Activated CD4-positive, alpha-beta T cell treated with anti-CD3 and anti-CD28 coated beads for 36 hours (primary cell): ENCODE measurements at regions of chrX and their contacts with region 1.

Region 1: DNA sequence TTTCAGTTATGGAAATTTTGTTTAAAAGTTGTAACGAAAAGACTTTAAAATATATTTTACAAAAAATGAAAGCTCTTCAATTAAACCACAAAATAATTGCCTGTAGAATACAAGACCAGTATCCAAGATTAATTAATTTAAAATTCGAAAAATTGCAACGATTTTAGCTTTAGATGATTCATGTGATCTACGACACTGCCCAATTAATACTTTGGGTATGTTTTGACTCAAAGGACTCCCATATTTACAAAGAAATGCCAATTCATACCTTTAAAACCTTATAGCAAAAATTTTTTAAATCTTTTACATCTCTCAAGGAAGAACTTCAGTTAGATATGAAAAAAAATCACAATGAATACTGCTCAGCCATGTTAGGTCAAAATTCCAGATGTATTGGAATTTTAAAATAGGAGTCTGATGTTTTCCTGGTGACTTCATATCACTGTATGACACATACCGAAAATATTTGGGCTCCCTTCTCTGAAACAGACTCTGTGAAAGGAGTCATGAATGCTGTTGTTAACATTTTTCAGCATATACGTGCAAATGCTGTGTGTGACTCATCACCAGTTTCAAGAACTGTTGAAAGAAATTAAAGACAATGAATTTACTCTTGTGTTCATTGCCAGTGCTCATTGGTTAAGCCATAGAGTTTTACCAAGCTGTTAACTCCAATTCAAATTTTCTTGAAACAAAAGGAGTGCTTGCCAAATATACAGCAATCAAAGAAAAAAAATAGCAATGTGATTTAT is 13.8 kb upstream of the SMS start:
- DNase-seq: no peak
- ATAC-seq: peak; percentile 88
- H3K4me3 Mint-ChIP-seq: no peak overlapping the region
- H3K27ac Mint-ChIP-seq: peak overlapping the region; percentile 83
- H3K4me1 Mint-ChIP-seq: peaks cover 30% of the 10 kb centered on the region
- H3K27me3 Mint-ChIP-seq: no peaks in the 10 kb centered on the region

Region 2: GRCh38 chrX:21870494-21870893 is 56.2 kb before region 1 on chrX:
- CTCF ChIA-PET with region 1: no interaction called
- POLR2A ChIA-PET with region 1: no interaction called
- intact Hi-C with region 1: no loop called
- DNase-seq: no peak
- ATAC-seq: no peak
- H3K4me3 Mint-ChIP-seq: no peak overlapping the region
- H3K27ac Mint-ChIP-seq: no peak overlapping the region
- H3K4me1 Mint-ChIP-seq: no peaks in the 10 kb centered on the region
- H3K27me3 Mint-ChIP-seq: no peaks in the 10 kb centered on the region

Region 3: DNA sequence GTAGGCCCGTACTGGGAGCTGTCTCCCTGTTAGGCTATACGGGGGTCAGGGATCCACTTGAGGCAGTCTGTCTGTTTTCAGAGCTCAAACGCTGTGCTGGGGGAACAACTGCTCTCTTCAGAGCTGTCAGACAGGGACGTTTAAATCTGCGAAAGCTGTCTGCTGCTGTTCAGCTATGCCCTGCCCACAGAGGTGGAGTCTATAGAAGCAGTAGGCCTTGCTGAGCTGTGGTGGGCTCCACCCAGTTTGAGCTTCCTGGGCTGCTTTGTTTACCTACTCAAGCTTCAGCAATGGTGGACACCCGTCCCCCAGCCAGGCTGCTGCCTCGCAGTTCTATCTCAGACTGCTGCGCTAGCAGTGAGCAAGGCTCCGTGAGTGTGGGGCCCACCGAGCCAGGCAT is 78.2 kb after region 1 on chrX:
- CTCF ChIA-PET with region 1: no interaction called
- POLR2A ChIA-PET with region 1: no interaction called
- intact Hi-C with region 1: no loop called
- DNase-seq: no peak
- ATAC-seq: no peak
- H3K4me3 Mint-ChIP-seq: no peak overlapping the region
- H3K27ac Mint-ChIP-seq: no peak overlapping the region
- H3K4me1 Mint-ChIP-seq: no peaks in the 10 kb centered on the region
- H3K27me3 Mint-ChIP-seq: no peaks in the 10 kb centered on the region

Region 4: GRCh38 chrX:22021751-22022324 is 95.1 kb after region 1 on chrX:
- CTCF ChIA-PET with region 1: no interaction called
- POLR2A ChIA-PET with region 1: no interaction called
- intact Hi-C with region 1: no loop called
- DNase-seq: no peak
- ATAC-seq: no peak
- H3K4me3 Mint-ChIP-seq: no peak overlapping the region
- H3K27ac Mint-ChIP-seq: no peak overlapping the region
- H3K4me1 Mint-ChIP-seq: peaks cover 3% of the 10 kb centered on the region
- H3K27me3 Mint-ChIP-seq: no peaks in the 10 kb centered on the region

Region 5: GRCh38 chrX:22063284-22063683 is 136.6 kb after region 1 on chrX:
- CTCF ChIA-PET with region 1: no interaction called
- POLR2A ChIA-PET with region 1: no interaction called
- intact Hi-C with region 1: loop called in 1 of 2 experiments (anchors 5 kb)
- DNase-seq: peak; percentile 59
- ATAC-seq: peak; percentile 33
- H3K4me3 Mint-ChIP-seq: no peak overlapping the region
- H3K27ac Mint-ChIP-seq: peak overlapping the region; percentile 63
- H3K4me1 Mint-ChIP-seq: peaks cover 72% of the 10 kb centered on the region
- H3K27me3 Mint-ChIP-seq: no peaks in the 10 kb centered on the region

Region 6: DNA sequence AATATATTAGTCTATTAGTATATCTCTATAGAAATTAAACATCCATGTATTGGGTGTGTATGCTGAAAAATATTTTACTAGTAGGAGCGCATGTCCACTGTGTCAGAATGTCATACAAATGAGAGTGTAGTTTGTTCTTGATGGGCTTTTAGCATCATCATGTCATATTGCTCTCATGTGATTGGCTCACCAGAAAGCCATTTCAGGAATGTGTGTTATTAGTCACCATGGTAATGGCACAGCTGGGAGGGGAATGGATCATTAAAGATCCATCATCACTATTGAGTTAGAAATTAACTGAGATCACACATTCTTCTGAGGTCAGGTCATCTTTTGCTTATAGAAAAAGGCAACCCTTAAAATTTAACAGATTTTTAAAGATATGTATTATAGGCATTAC is 182.7 kb after region 1 on chrX:
- CTCF ChIA-PET with region 1: no interaction called
- POLR2A ChIA-PET with region 1: no interaction called
- intact Hi-C with region 1: no loop called
- DNase-seq: no peak
- ATAC-seq: no peak
- H3K4me3 Mint-ChIP-seq: no peak overlapping the region
- H3K27ac Mint-ChIP-seq: no peak overlapping the region
- H3K4me1 Mint-ChIP-seq: peaks cover 9% of the 10 kb centered on the region
- H3K27me3 Mint-ChIP-seq: no peaks in the 10 kb centered on the region